CD4-positive, alpha-beta T cell (primary cell): ENCODE measurements at regions of chr1 and their contacts with region 1.

Region 1: GRCh38 chr1:16009030-16009709 is 5.1 kb downstream of the SRARP start:
- DNase-seq: peak; percentile 58 to 81 (median 64)
- ATAC-seq: peak; percentile 65
- H3K4me3 ChIP-seq: no peak overlapping the region
- H3K4me3 Mint-ChIP-seq: no peak overlapping the region
- H3K27ac ChIP-seq: no peak overlapping the region
- H3K27ac Mint-ChIP-seq: no peak overlapping the region
- H3K4me1 ChIP-seq: peaks cover 14% of the 10 kb centered on the region
- H3K4me1 Mint-ChIP-seq: no peaks in the 10 kb centered on the region
- H3K27me3 ChIP-seq: peaks cover 0 to 5% of the 10 kb centered on the region in 2 experiments
- H3K27me3 Mint-ChIP-seq: peaks cover 14% of the 10 kb centered on the region
- CTCF ChIP-seq: peak; percentile 99

Region 2: DNA sequence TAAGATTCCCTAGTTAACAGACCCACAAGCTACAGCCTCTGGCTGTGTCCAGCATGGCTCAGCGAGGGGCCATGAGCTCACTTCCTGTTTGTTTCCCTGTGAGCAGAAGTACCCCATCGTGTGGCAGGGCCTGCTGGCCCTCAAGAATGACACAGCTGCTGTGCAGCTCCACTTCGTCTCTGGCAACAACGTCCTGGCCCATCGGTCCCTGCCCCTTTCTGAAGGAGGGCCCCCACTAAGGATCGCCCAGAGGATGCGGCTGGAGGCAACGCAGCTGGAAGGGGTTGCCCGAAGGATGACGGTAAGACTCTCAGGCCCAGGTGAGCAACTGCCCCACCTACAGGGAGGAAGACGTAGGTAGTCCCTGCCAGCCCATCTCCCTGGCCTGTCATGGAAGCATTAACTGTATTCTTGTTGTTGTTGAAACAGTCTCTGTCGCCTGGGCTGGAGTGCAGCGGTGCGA is 71.4 kb before region 1 on chr1:
- CTCF ChIA-PET with region 1: no interaction called
- POLR2A ChIA-PET with region 1: no interaction called
- intact Hi-C with region 1: no loop called
- DNase-seq: peak in 1 of 14 experiments; percentile 38
- ATAC-seq: peak; percentile 21
- H3K4me3 ChIP-seq: no peak overlapping the region
- H3K4me3 Mint-ChIP-seq: no peak overlapping the region
- H3K27ac ChIP-seq: no peak overlapping the region
- H3K27ac Mint-ChIP-seq: peak overlapping the region; percentile 63
- H3K4me1 ChIP-seq: no peaks in the 10 kb centered on the region
- H3K4me1 Mint-ChIP-seq: no peaks in the 10 kb centered on the region
- H3K27me3 ChIP-seq: no peaks in the 10 kb centered on the region
- H3K27me3 Mint-ChIP-seq: no peaks in the 10 kb centered on the region
- CTCF ChIP-seq: no peak

Region 3: GRCh38 chr1:16055613-16056520 is 46.7 kb after region 1 on chr1:
- CTCF ChIA-PET with region 1: no interaction called
- POLR2A ChIA-PET with region 1: no interaction called
- intact Hi-C with region 1: loop called (anchors 1 kb)
- DNase-seq: peak; percentile 51 to 91 (median 80)
- ATAC-seq: peak; percentile 99
- H3K4me3 ChIP-seq: no peak overlapping the region
- H3K4me3 Mint-ChIP-seq: no peak overlapping the region
- H3K27ac ChIP-seq: no peak overlapping the region
- H3K27ac Mint-ChIP-seq: no peak overlapping the region
- H3K4me1 ChIP-seq: peaks cover 7% of the 10 kb centered on the region
- H3K4me1 Mint-ChIP-seq: peaks cover 6% of the 10 kb centered on the region
- H3K27me3 ChIP-seq: no peaks in the 10 kb centered on the region
- H3K27me3 Mint-ChIP-seq: no peaks in the 10 kb centered on the region
- CTCF ChIP-seq: peak; percentile 85

Region 4: GRCh38 chr1:16187748-16188401 is 178.7 kb after region 1 on chr1:
- CTCF ChIA-PET with region 1: no interaction called
- POLR2A ChIA-PET with region 1: no interaction called
- intact Hi-C with region 1: loop called (anchors 1 to 2 kb)
- DNase-seq: peak; percentile 57 to 88 (median 75)
- ATAC-seq: peak; percentile 91
- H3K4me3 ChIP-seq: no peak overlapping the region
- H3K4me3 Mint-ChIP-seq: no peak overlapping the region
- H3K27ac ChIP-seq: no peak overlapping the region
- H3K27ac Mint-ChIP-seq: no peak overlapping the region
- H3K4me1 ChIP-seq: peaks cover 7% of the 10 kb centered on the region
- H3K4me1 Mint-ChIP-seq: no peaks in the 10 kb centered on the region
- H3K27me3 ChIP-seq: peaks cover 0 to 4% of the 10 kb centered on the region in 2 experiments
- H3K27me3 Mint-ChIP-seq: peaks cover 10% of the 10 kb centered on the region
- CTCF ChIP-seq: peak; percentile 97